AG04449 (cell line): ENCODE measurements at regions of chr4 and their contacts with region 1.

Region 1: DNA sequence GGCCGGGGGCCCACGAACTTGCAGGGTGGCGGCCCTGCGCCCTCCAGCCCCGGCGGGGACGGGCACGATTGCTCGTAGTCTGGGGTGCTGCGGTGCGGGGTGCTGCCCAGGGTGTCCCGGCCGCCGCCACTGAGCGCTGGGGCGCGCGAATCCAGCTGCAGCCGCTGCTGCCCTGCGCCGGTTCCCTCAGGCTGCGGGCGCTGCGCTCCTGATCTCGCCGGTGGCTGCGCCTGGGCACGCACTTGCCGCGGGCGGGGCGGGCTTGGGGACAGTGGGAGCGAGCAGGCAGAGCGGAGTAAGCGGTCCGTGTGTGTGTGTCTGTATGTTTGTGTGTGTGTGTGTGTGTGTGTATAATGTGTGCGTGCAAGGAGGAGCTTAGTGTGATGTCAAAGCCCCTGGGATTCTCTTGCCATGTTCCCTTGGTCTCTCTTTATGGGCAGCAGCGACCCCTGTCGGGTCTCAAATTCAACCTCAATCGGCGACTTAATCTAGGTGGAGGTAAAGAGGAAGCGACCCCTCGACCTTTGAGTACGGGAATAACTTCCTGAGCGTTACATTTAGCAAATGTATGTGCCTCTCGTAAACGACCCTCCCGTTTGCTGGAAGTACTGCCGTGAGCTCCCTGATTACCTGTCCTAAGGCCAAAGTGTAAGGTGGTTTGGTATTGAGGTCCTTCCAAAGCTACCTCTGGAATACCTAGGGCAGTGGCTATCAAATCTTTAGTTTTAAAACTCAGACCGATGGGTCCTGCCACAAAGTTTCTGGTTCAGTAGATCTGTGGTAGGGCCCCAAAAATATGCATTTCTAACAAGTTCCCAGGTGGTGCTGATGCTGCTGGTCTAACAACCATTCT is at the start of gene RNF150:
- DNase-seq: peak; percentile 81
- H3K4me3 ChIP-seq: peak within 1 kb of the TSS; percentile 93
- CTCF ChIP-seq: peak; percentile 69

Region 2: DNA sequence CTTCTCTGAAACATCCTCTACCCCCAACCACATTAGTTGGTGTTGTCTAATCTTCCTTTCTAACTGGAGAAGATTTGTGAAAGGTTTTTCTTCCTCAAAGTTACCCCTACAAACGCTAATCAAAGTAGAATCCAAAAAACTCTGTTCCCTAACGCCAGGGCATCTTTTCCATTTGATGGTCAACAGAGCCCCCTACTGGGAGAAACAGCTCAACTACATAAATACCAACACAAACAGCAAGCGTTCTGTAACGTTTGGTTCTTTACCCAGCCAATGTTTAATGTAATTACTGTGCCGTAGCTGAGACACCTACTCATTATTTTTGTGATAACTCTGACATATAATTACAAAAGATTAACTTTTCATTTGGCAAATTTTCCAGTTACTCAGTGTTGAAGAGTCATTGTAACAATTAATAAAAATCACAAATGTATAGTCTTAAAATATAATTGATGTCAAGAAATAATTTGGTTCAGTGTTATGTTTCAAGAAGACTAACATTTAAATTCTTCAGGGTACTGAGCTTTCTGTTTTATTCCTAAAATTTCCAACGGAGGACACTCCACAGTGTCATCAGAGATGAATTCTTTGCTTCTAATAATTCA is 282.2 kb before region 1 on chr4:
- CTCF ChIA-PET with region 1: interaction called, 276 read pairs
- POLR2A ChIA-PET with region 1: no interaction called
- DNase-seq: no peak
- H3K4me3 ChIP-seq: no peak overlapping the region
- CTCF ChIP-seq: peak; percentile 63

Region 3: DNA sequence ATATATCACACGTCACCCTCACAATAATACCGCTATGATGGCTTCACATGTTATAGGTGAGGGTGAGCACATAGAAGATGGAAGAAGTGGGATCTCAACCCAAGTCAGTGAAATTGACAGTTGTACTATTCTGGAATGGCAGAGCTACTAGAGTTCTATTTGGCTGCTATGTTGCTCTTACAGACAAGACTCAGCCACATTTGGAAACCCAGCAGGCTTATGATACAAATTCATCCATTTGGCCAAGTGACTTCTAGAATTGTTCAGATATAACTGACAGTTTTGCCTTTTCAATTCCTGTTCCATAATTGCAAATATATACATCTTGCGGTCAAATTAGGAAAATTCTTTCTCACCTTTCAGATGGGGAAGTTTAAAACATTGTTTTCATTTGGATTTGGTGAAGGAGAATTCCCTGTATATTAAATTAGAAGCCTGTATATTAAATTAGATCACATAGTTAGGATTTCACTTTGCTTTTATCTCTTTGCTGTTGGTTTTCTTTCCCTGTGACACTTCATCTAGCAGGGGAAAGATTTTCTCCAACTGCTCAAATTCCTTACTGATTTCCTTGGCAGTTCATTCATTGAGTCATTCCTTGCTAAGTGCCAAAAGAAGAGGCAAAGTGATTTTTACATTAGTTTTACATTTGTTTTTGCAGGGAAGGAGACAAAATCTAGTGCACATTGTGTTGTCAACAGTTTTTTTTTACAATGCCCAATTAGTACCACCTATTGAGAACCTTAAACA is 256.6 kb before region 1 on chr4:
- CTCF ChIA-PET with region 1: interaction called, 20 read pairs
- POLR2A ChIA-PET with region 1: no interaction called
- DNase-seq: no peak
- H3K4me3 ChIP-seq: no peak overlapping the region
- CTCF ChIP-seq: no peak

Region 4: GRCh38 chr4:140903522-140904475 is 229.6 kb before region 1 on chr4:
- CTCF ChIA-PET with region 1: interaction called, 12 read pairs
- POLR2A ChIA-PET with region 1: no interaction called
- DNase-seq: no peak
- H3K4me3 ChIP-seq: no peak overlapping the region
- CTCF ChIP-seq: no peak

Region 5: GRCh38 chr4:140996766-140997165 is 136.6 kb before region 1 on chr4:
- CTCF ChIA-PET with region 1: interaction called, 98 read pairs
- POLR2A ChIA-PET with region 1: interaction called, 5 read pairs
- DNase-seq: peak; percentile 79
- H3K4me3 ChIP-seq: no peak overlapping the region
- CTCF ChIP-seq: peak; percentile 15

Region 6: GRCh38 chr4:141144207-141144606 is 10.8 kb after region 1 on chr4:
- CTCF ChIA-PET with region 1: interaction called, 32 read pairs
- POLR2A ChIA-PET with region 1: no interaction called
- DNase-seq: no peak
- H3K4me3 ChIP-seq: no peak overlapping the region
- CTCF ChIP-seq: no peak

Region 7: DNA sequence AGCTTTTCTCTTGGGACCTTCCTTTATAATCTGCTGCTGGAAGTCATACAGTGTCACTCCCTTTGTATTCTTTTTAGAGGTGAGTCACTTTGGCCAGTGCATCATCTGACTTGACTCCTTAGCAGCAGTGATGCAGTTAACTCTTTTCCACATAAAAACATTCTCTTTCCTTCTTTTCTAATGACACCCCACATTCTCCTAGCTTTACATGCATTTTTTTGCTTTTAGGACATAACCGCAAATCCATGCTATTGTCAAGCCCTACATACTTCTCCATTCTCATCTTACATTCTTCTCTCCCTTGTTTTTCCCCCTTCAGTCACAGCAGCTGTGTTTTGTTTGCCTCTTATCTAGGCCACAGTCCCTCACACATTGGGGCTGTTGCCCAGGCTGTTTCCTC is 142.5 kb after region 1 on chr4:
- CTCF ChIA-PET with region 1: no interaction called
- POLR2A ChIA-PET with region 1: no interaction called
- DNase-seq: peak; percentile 66
- H3K4me3 ChIP-seq: no peak overlapping the region
- CTCF ChIP-seq: no peak